ENCODE measurements at regions of chr7 and their contacts with region 1.

Region 1: GRCh38 chr7:4641667-4642467 is 40.2 kb upstream of the FOXK1 start:
- DNase-seq: peak; percentile 98
- H3K4me3 ChIP-seq: peak overlapping the region; percentile 53 to 89 (median 75)
- H3K27ac ChIP-seq: peak overlapping the region; percentile 84 to 96 (median 92)
- H3K4me1 ChIP-seq: peaks cover 0 to 19% (median 13%) of the 10 kb centered on the region in 6 donors
- H3K27me3 ChIP-seq: no peaks in the 10 kb centered on the region
- CTCF ChIP-seq: peak in 8 of 11 experiments; percentile 12 to 65 (median 52)
- POLR2A ChIP-seq: peak in 2 of 3 donors; percentile 82 to 87

Region 2: DNA sequence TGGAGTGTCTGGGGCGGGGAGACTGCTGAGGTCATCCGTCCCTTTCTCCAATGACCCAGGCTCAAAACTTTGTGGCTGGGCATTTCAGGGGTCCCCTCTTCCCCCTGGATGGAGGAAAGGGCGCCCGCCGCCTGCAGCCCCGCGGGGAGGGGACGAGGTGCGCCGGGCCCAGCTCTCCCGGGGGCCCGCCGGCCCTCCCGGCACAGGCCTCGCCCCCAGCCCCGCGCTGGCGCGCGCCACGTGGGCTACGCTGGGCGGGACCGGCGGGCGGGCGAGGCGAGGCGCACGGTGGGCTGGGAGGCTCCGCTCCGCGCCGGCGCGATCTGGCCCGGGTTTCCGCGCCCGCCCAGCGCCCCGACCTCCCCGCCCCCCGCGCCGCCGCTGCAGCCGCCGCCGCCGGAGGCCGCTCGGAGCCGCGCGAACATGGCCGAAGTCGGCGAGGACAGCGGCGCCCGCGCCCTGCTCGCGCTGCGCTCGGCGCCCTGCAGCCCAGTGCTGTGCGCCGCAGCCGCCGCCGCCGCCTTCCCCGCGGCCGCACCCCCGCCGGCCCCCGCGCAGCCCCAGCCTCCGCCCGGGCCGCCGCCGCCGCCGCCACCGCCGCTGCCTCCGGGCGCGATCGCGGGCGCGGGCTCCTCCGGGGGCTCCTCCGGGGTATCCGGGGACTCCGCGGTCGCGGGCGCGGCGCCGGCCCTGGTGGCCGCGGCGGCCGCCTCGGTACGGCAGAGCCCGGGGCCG is 40.2 kb after region 1 on chr7 and contains the start of gene FOXK1:
- intact Hi-C with region 1: loop called (anchors 5 kb)
- DNase-seq: peak; percentile 95
- H3K4me3 ChIP-seq: peak within 1 kb of the TSS; percentile 75 to 96 (median 86)
- H3K27ac ChIP-seq: peak within 1 kb of the TSS; percentile 82 to 96 (median 90)
- H3K4me1 ChIP-seq: peaks cover 17 to 48% (median 44%) of the 10 kb centered on the region in 6 donors
- H3K27me3 ChIP-seq: no peaks in the 10 kb centered on the region
- CTCF ChIP-seq: no peak
- POLR2A ChIP-seq: peak in 1 of 3 donors; percentile 59
- total RNA-seq, gene FOXK1: 26.3 to 46.0 (median 36.9) TPM